Calu3 (cell line): ENCODE measurements at regions of chr10 and their contacts with region 1.

Region 1: DNA sequence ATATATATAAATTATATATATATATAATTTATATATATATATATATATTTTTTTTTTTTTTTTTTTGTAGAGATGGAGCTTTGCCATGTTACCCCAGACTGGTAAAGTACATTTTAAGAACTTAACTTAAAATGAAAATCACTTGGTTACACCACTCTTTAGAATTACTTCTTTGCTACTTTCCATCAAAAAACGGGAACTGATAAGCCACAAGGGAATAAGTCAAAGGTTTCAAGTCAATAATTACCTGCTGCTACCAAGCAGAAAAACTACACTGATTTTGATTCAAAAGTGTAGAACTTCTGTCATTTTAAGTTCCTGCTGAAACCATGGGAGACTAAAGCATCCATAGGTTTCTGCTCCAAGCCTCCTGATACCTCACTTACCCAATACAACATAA is 12.2 kb downstream of the PPA1 start:
- DNase-seq: no peak
- H3K4me3 Mint-ChIP-seq: peak overlapping the region; percentile 44
- H3K27ac Mint-ChIP-seq: peak overlapping the region; percentile 87
- H3K4me1 Mint-ChIP-seq: peaks cover 41% of the 10 kb centered on the region
- H3K27me3 Mint-ChIP-seq: no peaks in the 10 kb centered on the region
- CTCF ChIP-seq: no peak

Region 2: GRCh38 chr10:70169649-70170364 is 51.2 kb before region 1 on chr10:
- CTCF ChIA-PET with region 1: interaction called, 20 read pairs
- intact Hi-C with region 1: no loop called
- DNase-seq: no peak
- H3K4me3 Mint-ChIP-seq: peak overlapping the region; percentile 92
- H3K27ac Mint-ChIP-seq: peak overlapping the region; percentile 94
- H3K4me1 Mint-ChIP-seq: peaks cover 10% of the 10 kb centered on the region
- H3K27me3 Mint-ChIP-seq: no peaks in the 10 kb centered on the region
- CTCF ChIP-seq: no peak

Region 3: GRCh38 chr10:70255329-70256299 is 34.6 kb after region 1 on chr10:
- CTCF ChIA-PET with region 1: interaction called, 9 read pairs
- intact Hi-C with region 1: loop called (anchors 2 kb)
- DNase-seq: peak; percentile 89
- H3K4me3 Mint-ChIP-seq: peak overlapping the region; percentile 36
- H3K27ac Mint-ChIP-seq: peak overlapping the region; percentile 60
- H3K4me1 Mint-ChIP-seq: peaks cover 54% of the 10 kb centered on the region
- H3K27me3 Mint-ChIP-seq: no peaks in the 10 kb centered on the region
- CTCF ChIP-seq: no peak

Region 4: GRCh38 chr10:70272925-70273316 is 51.9 kb after region 1 on chr10:
- CTCF ChIA-PET with region 1: interaction called, 26 read pairs
- intact Hi-C with region 1: no loop called
- DNase-seq: no peak
- H3K4me3 Mint-ChIP-seq: no peak overlapping the region
- H3K27ac Mint-ChIP-seq: no peak overlapping the region
- H3K4me1 Mint-ChIP-seq: peaks cover 14% of the 10 kb centered on the region
- H3K27me3 Mint-ChIP-seq: no peaks in the 10 kb centered on the region
- CTCF ChIP-seq: peak; percentile 53

Region 5: GRCh38 chr10:70348228-70348850 is 127.3 kb after region 1 on chr10:
- CTCF ChIA-PET with region 1: interaction called, 21 read pairs
- intact Hi-C with region 1: loop called (anchors 1 kb)
- DNase-seq: peak; percentile 60
- H3K4me3 Mint-ChIP-seq: no peak overlapping the region
- H3K27ac Mint-ChIP-seq: no peak overlapping the region
- H3K4me1 Mint-ChIP-seq: peaks cover 10% of the 10 kb centered on the region
- H3K27me3 Mint-ChIP-seq: no peaks in the 10 kb centered on the region
- CTCF ChIP-seq: no peak

Region 6: GRCh38 chr10:70381471-70382421 is 160.7 kb after region 1 on chr10:
- CTCF ChIA-PET with region 1: interaction called, 59 read pairs
- intact Hi-C with region 1: loop called (anchors 5 kb)
- DNase-seq: peak; percentile 66
- H3K4me3 Mint-ChIP-seq: peak overlapping the region; percentile 85
- H3K27ac Mint-ChIP-seq: peak overlapping the region; percentile 19
- H3K4me1 Mint-ChIP-seq: peaks cover 20% of the 10 kb centered on the region
- H3K27me3 Mint-ChIP-seq: peaks cover 8% of the 10 kb centered on the region
- CTCF ChIP-seq: no peak

Region 7: DNA sequence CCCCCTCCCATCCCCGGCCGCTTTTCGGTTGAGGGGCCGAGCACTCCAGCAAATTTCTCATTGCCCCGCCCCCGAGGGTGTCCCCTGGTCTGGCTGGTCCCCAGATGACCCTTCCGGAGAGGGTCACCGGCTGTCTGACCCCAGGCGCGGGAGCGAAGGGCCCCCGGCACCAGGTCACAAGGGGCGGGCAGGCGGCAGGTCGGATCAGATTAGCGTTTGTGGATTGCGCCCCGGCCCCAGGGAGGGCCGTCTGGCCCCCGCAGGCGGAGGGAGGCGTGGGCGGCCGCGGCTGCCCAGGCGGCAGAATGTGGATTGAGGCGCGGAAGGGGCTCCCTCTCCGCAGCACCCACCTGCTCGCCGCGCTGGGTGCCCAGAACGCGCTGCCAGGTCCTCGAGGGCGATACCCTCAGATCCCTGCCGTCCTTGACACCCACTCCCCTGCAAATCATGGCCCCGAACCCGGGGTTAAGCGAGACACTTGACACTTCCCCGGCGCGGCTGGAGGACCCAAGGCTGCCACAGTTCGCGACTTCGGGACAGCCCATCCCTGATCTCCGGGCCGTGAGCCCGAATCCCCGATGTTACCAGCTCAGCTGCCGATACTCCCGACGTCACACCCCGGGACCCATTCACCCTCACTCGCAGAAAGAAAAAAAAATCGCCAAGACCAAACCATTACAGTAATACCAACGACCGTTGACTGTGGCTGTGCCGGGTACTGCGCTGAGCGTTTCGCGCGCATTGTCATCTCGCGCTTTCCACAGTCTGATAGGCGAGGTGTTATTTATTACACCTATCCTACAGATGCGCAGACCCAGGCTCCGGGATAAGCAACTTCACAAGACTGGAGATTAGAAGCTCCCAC is 219.5 kb after region 1 on chr10:
- CTCF ChIA-PET with region 1: no interaction called
- intact Hi-C with region 1: no loop called
- DNase-seq: no peak
- H3K4me3 Mint-ChIP-seq: peak overlapping the region; percentile 41
- H3K27ac Mint-ChIP-seq: no peak overlapping the region
- H3K4me1 Mint-ChIP-seq: peaks cover 8% of the 10 kb centered on the region
- H3K27me3 Mint-ChIP-seq: peaks cover 66% of the 10 kb centered on the region
- CTCF ChIP-seq: no peak

Region 8: GRCh38 chr10:70508912-70509756 is 288.1 kb after region 1 on chr10:
- CTCF ChIA-PET with region 1: no interaction called
- intact Hi-C with region 1: no loop called
- DNase-seq: no peak
- H3K4me3 Mint-ChIP-seq: no peak overlapping the region
- H3K27ac Mint-ChIP-seq: no peak overlapping the region
- H3K4me1 Mint-ChIP-seq: no peaks in the 10 kb centered on the region
- H3K27me3 Mint-ChIP-seq: peaks cover 51% of the 10 kb centered on the region
- CTCF ChIP-seq: no peak